ENCODE measurements at regions of chr2 and their contacts with region 1.

Region 1: GRCh38 chr2:172710584-172711024 is 25.0 kb upstream of the RAPGEF4 start:
- DNase-seq: peak in 1 of 5 donors; percentile 24
- H3K4me3 ChIP-seq: no peak overlapping the region
- H3K27ac ChIP-seq: no peak overlapping the region
- H3K4me1 ChIP-seq: no peaks in the 10 kb centered on the region
- H3K27me3 ChIP-seq: no peaks in the 10 kb centered on the region
- CTCF ChIP-seq: no peak
- EP300 ChIP-seq: no peak
- POLR2A ChIP-seq: no peak

Region 2: GRCh38 chr2:172596776-172597175 is 113.8 kb before region 1 on chr2:
- intact Hi-C with region 1: loop called in 1 of 4 experiments (anchors 10 kb)
- DNase-seq: no peak
- H3K4me3 ChIP-seq: no peak overlapping the region
- H3K27ac ChIP-seq: no peak overlapping the region
- H3K4me1 ChIP-seq: no peaks in the 10 kb centered on the region
- H3K27me3 ChIP-seq: no peaks in the 10 kb centered on the region
- CTCF ChIP-seq: no peak
- EP300 ChIP-seq: no peak
- POLR2A ChIP-seq: no peak

Region 3: DNA sequence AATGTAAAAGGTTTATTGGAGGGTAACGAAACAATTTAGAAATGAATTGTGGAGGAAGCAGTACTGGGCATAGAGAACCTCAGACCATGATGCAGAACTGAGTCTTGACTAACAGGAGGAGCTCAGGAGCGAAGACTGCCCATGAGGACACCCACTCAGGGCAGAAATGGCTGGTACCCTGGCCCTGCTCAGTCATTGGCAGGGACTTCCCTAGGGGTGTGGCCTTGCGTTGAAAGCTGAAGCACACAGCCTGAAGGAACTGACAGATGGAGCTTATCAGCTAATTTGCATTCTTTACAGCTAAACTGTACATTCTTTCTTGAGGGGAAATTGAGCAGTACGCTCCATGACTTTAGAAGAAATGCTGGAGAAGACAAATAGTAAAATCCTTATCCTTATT is 97.6 kb before region 1 on chr2:
- intact Hi-C with region 1: no loop called
- DNase-seq: no peak
- H3K4me3 ChIP-seq: no peak overlapping the region
- H3K27ac ChIP-seq: no peak overlapping the region
- H3K4me1 ChIP-seq: no peaks in the 10 kb centered on the region
- H3K27me3 ChIP-seq: no peaks in the 10 kb centered on the region
- CTCF ChIP-seq: no peak
- EP300 ChIP-seq: no peak
- POLR2A ChIP-seq: no peak

Measured in ovary (tissue), 10 donors.